Activated CD4-positive, alpha-beta memory T cell treated with anti-CD3 and anti-CD28 coated beads, Interleukin-2, amount 10 ng/mL, durations not matched to agents 7 days and 5 days (primary cell): ENCODE measurements at regions of chr7 and their contacts with region 1.

Region 1: GRCh38 chr7:104983578-104984539 is 30.1 kb upstream of the KMT2E start:
- DNase-seq: peak; percentile 88
- H3K4me3 Mint-ChIP-seq: peak overlapping the region; percentile 98
- H3K27ac Mint-ChIP-seq: peak overlapping the region; percentile 99
- H3K4me1 Mint-ChIP-seq: peaks cover 72% of the 10 kb centered on the region
- H3K27me3 Mint-ChIP-seq: no peaks in the 10 kb centered on the region

Region 2: GRCh38 chr7:104838537-104839299 is 145.1 kb before region 1 on chr7:
- CTCF ChIA-PET with region 1: no interaction called
- POLR2A ChIA-PET with region 1: no interaction called
- DNase-seq: no peak
- H3K4me3 Mint-ChIP-seq: no peak overlapping the region
- H3K27ac Mint-ChIP-seq: no peak overlapping the region
- H3K4me1 Mint-ChIP-seq: no peaks in the 10 kb centered on the region
- H3K27me3 Mint-ChIP-seq: peaks cover 18% of the 10 kb centered on the region

Region 3: GRCh38 chr7:104943502-104944343 is 40.1 kb before region 1 on chr7:
- CTCF ChIA-PET with region 1: interaction called, 20 read pairs
- POLR2A ChIA-PET with region 1: interaction called, 133 read pairs
- DNase-seq: peak; percentile 80
- H3K4me3 Mint-ChIP-seq: peak overlapping the region; percentile 82
- H3K27ac Mint-ChIP-seq: peak overlapping the region; percentile 98
- H3K4me1 Mint-ChIP-seq: peaks cover 71% of the 10 kb centered on the region
- H3K27me3 Mint-ChIP-seq: no peaks in the 10 kb centered on the region

Region 4: GRCh38 chr7:104963991-104964385 is 19.9 kb before region 1 on chr7:
- CTCF ChIA-PET with region 1: interaction called, 13 read pairs
- POLR2A ChIA-PET with region 1: interaction called, 7 read pairs
- DNase-seq: no peak
- H3K4me3 Mint-ChIP-seq: no peak overlapping the region
- H3K27ac Mint-ChIP-seq: no peak overlapping the region
- H3K4me1 Mint-ChIP-seq: peaks cover 25% of the 10 kb centered on the region
- H3K27me3 Mint-ChIP-seq: no peaks in the 10 kb centered on the region

Region 5: DNA sequence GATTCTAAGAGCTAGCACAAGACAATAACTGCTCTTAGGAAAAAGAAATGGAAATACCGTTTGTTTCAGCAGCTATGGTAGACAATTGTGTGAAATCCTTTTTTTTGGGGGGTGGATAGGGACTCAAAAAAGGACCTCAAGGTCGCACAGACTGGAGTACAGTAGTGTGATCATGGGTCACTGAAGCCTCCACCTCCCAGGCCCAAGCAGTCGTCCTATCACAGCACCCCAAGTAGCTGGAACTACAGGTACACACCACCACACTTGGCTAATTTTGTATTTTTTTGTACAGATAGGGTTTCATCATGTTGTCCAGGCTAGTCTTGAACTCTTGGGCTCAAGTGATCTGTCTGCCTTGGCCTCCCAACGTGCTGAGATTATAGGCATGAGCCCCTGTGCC is 64.1 kb after region 1 on chr7:
- CTCF ChIA-PET with region 1: interaction called, 11 read pairs
- POLR2A ChIA-PET with region 1: interaction called, 4 read pairs
- DNase-seq: no peak
- H3K4me3 Mint-ChIP-seq: no peak overlapping the region
- H3K27ac Mint-ChIP-seq: no peak overlapping the region
- H3K4me1 Mint-ChIP-seq: peaks cover 32% of the 10 kb centered on the region
- H3K27me3 Mint-ChIP-seq: no peaks in the 10 kb centered on the region